ENCODE measurements at regions of chr12 and their contacts with region 1.

Region 1: GRCh38 chr12:57112492-57113294 is 1.5 kb upstream of the STAT6 start:
- DNase-seq: peak in 8 of 10 donors; percentile 70 to 97 (median 84)

Region 2: DNA sequence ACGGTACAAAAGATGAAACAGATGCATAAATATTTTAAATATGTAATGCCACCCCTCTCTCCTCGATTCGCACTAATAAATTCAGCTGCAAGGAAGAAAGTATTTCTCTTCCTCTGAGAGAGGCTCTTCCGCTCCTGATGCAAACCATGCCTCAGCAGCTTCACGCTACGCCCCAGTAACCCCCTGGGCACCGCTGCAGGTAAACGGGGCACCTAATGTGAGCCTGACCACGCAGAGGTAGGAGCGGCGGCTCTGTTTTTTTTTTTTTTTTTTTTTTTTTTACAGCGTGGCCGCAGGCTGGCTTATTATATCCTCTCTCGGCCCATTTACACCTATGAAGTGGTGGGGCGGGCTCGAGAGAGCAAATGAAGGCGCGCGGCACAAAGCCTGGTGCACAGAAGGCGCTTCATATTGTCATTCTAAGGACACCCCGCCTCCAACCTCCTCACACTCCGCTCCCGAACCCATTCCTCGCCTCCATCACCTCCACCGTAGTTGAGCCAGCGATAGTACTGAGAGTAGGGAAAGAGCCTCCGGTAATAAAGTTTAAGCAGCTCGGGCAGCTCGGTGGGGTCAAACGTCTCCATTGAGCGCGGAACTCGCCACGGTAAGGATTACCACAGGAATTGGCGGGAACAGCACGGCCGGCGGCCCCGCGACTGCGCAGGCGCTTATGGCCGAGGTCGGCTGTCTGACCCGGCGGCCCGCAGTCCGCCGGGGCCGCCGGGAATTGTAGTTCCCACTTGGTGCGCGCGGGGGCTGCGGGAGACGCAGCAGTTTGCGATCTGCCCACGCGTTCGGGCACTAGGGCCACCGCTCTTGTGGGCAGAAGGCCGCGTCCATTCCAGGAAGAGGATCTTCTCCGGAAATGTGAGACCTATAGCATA is 360.7 kb before region 1 on chr12 and contains the start of gene PRIM1:
- intact Hi-C with region 1: no loop called
- DNase-seq: peak; percentile 74 to 98 (median 82)

Region 3: DNA sequence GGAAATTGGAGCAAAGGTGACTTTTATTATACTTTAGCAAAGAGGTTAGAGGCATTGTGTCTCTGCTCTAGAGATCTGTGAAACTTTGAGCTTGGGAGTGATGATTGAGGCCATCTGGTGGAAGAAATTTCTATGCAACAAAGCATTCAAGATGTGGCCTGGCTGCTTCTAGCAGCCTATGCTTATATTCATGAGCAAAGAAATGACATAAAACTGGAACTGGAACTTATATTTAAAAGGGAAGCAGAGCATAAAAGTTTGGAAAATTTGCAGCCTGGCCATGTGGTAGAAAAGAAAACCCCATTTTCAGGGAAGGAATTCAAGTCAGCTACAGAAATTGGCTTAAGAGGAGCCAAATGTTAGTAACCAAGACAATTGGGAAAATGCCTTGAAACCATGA is 248.9 kb before region 1 on chr12:
- intact Hi-C with region 1: no loop called
- DNase-seq: no peak

Region 4: GRCh38 chr12:57008178-57008577 is 104.5 kb before region 1 on chr12:
- intact Hi-C with region 1: loop called (anchors 1 kb)
- DNase-seq: peak in 1 of 10 donors; percentile 12

Region 5: DNA sequence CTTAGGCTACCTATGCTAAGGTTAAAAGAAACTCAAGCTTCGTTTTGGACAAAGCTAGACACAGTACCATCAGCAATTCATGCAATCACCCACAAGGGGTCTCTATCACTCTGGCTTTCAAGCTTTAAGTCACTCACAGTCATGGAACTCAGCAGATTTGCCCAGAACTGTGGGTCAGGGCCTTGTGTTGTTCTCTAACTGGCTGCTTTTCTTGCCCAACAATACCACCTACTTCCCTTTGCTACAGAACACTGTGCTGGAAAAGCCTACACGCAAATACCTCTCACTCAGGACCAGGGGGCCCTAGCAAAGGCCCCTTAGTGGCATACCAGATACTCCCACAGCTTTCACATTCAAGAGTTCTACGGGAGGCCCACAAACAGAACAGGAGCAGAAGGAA is 43.2 kb before region 1 on chr12:
- intact Hi-C with region 1: loop called (anchors 1 kb)
- DNase-seq: peak in 4 of 10 donors; percentile 50 to 82 (median 55)

Region 6: GRCh38 chr12:57952766-57953165 is 840.1 kb after region 1 on chr12:
- intact Hi-C with region 1: no loop called
- DNase-seq: no peak

Measured in posterior cingulate gyrus (tissue), 11 donors.